ENCODE measurements at regions of chr12 and their contacts with region 1.

Region 1: DNA sequence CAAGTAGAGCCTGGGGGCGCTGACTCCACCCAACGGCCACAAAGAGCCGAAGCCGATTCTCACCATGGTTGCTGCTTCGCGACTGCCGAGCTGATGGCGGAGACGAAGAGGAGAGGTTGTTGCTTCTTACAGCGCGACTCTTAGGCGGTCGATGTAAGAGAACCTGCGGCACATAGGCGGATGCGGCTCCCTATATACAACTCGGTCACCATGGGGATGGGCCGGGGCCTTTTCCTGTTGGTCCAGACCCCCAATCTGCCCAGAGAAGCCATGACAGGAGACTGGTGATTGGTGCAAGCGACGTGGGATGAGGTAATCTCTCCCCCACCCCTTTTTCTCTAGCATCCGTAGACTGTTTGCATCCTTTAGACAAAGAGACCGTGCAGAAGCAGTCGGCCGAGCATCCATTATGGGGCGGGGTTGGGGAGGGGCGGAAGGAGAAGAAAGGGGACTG is at the start of gene TUBA1A:
- DNase-seq: peak; percentile 93 to 100 (median 99)
- H3K4me3 ChIP-seq: peak within 1 kb of the TSS; percentile 62 to 100 (median 98)
- H3K27ac ChIP-seq: peak within 1 kb of the TSS; percentile 98 to 100 (median 100)
- H3K27me3 ChIP-seq: no peaks in the 10 kb centered on the region
- CTCF ChIP-seq: peak in 7 of 56 donors; percentile 2 to 29 (median 14)
- total RNA-seq, gene TUBA1A: 197 to 1,976 (median 609) TPM

Region 2: GRCh38 chr12:49069507-49070346 is 119.2 kb before region 1 on chr12 and contains the start of gene RHEBL1:
- intact Hi-C with region 1: loop called (anchors 5 to 10 kb)
- DNase-seq: peak; percentile 97 to 99 (median 99)
- H3K4me3 ChIP-seq: peak within 1 kb of the TSS; percentile 55 to 99 (median 83)
- H3K27ac ChIP-seq: peak within 1 kb of the TSS in 50 of 59 donors; percentile 9 to 91 (median 64)
- H3K27me3 ChIP-seq: no peaks in the 10 kb centered on the region
- CTCF ChIP-seq: peak in 43 of 56 donors; percentile 10 to 66 (median 40)
- total RNA-seq, gene RHEBL1: 0.55 to 10.5 (median 5.5) TPM

Region 3: GRCh38 chr12:49088190-49088931 is 100.6 kb before region 1 on chr12:
- intact Hi-C with region 1: loop called in 1 of 2 experiments (anchors 5 kb)
- DNase-seq: peak; percentile 55 to 88 (median 80)
- H3K4me3 ChIP-seq: peak overlapping the region in 47 of 59 donors; percentile 5 to 55 (median 35)
- H3K27ac ChIP-seq: peak overlapping the region in 54 of 59 donors; percentile 27 to 94 (median 82)
- H3K27me3 ChIP-seq: peaks cover 0 to 43% (median 10%) of the 10 kb centered on the region in 45 donors
- CTCF ChIP-seq: peak; percentile 50 to 95 (median 92)

Region 4: DNA sequence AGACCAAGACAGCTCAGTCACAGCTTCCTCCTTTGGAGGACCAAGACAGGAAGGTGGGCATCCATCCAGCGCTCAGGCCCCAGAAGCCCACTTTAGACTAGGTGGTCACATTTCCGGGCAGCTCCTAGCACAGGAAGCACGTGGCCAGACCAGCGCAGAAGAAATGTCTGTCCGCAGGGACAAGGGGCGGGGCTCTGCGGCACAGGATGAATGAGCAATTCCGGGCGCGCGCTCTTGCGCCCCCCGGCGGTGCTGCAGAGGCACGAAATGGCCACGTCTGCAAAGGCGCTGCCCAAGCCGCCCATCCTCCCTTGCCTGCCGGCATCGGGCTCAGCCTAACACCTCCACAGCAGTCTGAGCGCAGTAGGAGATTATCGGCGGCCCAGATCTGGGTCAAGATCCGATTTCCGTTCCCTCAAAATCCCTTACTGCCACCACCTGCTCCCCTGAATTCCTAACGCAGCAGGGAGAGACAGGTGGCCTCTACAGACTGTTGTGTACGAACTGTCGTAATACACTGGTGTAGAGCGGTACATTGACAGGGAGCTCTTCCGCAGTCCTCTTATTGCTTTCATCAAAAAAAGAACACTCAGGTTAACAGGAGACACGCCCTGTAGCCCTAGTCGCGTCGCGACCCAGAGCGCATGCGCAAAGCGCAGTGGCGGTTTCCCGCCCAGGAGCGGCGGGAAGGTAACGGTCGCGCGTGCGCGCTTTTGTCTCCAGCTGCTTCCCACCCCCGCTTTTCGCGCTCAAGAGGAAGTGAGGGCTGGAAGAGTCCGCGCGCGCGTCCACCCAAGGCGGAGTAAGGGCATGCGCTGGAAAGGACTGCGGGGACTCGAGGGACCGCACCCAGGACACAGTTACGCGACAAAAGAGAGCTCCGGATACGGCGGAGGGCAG is 58.5 kb before region 1 on chr12:
- intact Hi-C with region 1: loop called (anchors 1 kb)
- DNase-seq: peak; percentile 88 to 96 (median 92)
- H3K4me3 ChIP-seq: peak overlapping the region; percentile 69 to 100 (median 98)
- H3K27ac ChIP-seq: peak overlapping the region; percentile 94 to 100 (median 99)
- H3K27me3 ChIP-seq: no peaks in the 10 kb centered on the region
- CTCF ChIP-seq: peak; percentile 74 to 97 (median 93)

Region 5: DNA sequence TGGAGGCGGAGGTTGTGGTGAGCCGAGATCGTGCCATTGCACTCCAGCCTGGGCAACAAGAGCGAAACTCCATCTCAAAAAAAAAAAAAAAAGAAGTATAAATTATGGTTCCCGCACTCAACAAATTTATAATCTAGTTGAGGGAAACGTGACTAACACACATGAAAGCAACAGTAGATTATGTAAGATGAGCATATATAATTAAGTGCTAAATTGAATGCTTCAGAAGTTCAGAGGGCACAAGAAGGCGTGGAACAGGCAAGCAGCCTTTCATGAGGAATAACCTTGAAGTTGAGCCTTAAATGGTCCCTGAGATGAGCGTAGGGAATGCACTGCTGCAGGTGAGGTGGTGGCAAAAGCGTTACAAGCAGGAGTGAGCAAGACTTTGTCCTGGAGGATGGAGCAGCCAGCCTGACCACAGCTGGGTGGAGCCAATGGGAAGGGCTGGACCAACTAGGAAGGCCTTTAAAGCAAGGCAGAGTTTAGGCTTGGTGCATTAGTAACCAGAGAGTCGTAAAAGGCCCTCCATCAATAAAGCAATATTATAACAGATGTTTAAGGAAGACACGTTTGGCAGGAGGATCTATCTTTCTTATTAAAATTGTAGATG is 30.6 kb after region 1 on chr12:
- intact Hi-C with region 1: loop called (anchors 1 kb)
- DNase-seq: no peak
- H3K4me3 ChIP-seq: no peak overlapping the region
- H3K27ac ChIP-seq: no peak overlapping the region
- H3K27me3 ChIP-seq: no peaks in the 10 kb centered on the region
- CTCF ChIP-seq: no peak

Region 6: GRCh38 chr12:49232940-49233841 is 44.2 kb after region 1 on chr12:
- intact Hi-C with region 1: loop called (anchors 1 kb)
- DNase-seq: peak; percentile 49 to 88 (median 85)
- H3K4me3 ChIP-seq: peak overlapping the region; percentile 24 to 86 (median 68)
- H3K27ac ChIP-seq: peak overlapping the region; percentile 95 to 100 (median 99)
- H3K27me3 ChIP-seq: no peaks in the 10 kb centered on the region
- CTCF ChIP-seq: peak in 49 of 56 donors; percentile 6 to 63 (median 37)